Posterior cingulate gyrus (tissue), 11 donors: ENCODE measurements at regions of chr7 and their contacts with region 1.

Region 1: DNA sequence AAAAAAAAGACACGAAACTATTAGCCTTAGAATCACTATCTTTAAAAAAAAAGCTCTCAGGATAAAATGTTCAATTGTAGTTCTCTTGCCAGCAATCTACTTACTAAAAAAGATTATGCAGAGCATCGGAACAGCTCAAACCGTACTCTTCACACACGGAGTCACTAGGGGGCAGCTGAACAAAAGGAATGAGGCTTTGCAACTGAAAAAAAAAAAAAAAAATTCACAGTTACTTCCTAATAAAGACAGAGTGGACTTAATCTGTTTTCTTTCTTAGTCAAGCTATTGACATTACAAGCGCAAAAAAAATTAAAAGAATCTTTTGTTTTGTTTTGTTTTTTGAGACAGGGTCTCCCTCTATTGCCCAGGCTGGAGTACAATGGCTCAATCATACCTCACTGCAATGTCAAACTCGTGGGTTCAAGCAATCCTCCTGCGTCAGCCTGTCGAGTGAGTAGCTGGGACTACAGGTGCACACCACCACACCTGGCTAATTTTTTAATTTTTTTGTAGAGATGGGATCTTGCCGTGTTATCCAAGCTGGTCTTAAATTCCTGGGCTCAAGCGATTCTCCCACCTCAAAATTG is 11.5 kb downstream of the PMS2 start:
- DNase-seq: peak in 4 of 10 donors; percentile 17 to 44 (median 22)

Region 2: DNA sequence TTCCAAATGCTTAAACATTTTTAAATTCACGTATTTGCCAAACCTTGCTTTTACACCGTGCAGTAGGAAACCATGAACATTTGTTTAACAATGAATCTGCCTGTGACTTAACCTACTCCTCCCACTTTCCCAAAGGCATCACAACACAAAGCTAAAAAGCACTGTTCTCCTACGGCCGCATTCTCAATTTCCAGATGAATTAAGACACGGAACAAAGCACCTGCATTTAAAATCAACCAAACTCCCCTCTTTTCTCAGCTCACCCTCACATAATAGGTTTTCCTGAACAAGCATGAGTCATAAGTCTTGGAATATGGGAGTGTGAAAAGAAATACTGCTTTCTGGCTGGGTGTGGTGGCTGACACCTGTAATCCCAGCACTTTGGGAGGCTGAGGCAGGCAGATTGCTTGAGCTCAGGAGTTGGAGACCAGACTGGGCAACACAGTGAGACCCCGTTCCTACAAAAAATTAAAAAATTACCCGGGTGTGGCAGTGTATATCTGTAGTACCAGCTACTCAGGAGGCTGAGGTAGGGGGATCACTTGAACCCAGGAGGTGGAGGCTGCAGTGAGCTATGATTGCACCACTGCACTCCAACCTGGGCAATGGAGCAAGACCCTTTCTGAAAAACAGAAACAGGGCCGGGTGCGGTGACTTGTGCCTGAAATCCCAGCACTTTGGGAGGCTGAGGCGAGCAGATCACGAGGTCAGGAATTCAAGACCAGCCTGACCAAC is 326.8 kb after region 1 on chr7:
- intact Hi-C with region 1: loop called (anchors 5 kb)
- DNase-seq: peak in 3 of 10 donors; percentile 5 to 63 (median 24)